Naive thymus-derived CD4-positive, alpha-beta T cell (primary cell): ENCODE measurements at regions of chr14 and their contacts with region 1.

Region 1: GRCh38 chr14:23095196-23096108 is at the start of gene C14orf119:
- DNase-seq: peak in 8 of 9 donors; percentile 88 to 100 (median 100)
- ATAC-seq: peak; percentile 93
- H3K4me3 ChIP-seq: peak within 1 kb of the TSS; percentile 88
- H3K4me3 Mint-ChIP-seq: no peak within 1 kb of the TSS
- H3K27ac ChIP-seq: peak within 1 kb of the TSS; percentile 97
- H3K27ac Mint-ChIP-seq: no peak within 1 kb of the TSS
- H3K4me1 ChIP-seq: peaks cover 26 to 32% of the 10 kb centered on the region in 2 donors
- H3K4me1 Mint-ChIP-seq: peaks cover 3 to 63% (median 33%) of the 10 kb centered on the region in 7 donors
- H3K27me3 ChIP-seq: no peaks in the 10 kb centered on the region
- H3K27me3 Mint-ChIP-seq: no peaks in the 10 kb centered on the region
- total RNA-seq, gene C14orf119: 6.0 to 49.9 (median 43.4) TPM

Region 2: GRCh38 chr14:22766456-22767322 is 328.8 kb before region 1 on chr14 and contains the start of gene OXA1L:
- CTCF ChIA-PET with region 1: no interaction called
- POLR2A ChIA-PET with region 1: interaction called, 8 read pairs
- intact Hi-C with region 1: loop called in 1 of 2 experiments (anchors 2 kb)
- DNase-seq: peak; percentile 86 to 99 (median 96)
- ATAC-seq: peak; percentile 96
- H3K4me3 ChIP-seq: peak within 1 kb of the TSS; percentile 93
- H3K4me3 Mint-ChIP-seq: peak within 1 kb of the TSS; percentile 86 to 97 (median 90)
- H3K27ac ChIP-seq: peak within 1 kb of the TSS; percentile 86
- H3K27ac Mint-ChIP-seq: peak within 1 kb of the TSS; percentile 88 to 99 (median 97)
- H3K4me1 ChIP-seq: peaks cover 18 to 24% of the 10 kb centered on the region in 2 donors
- H3K4me1 Mint-ChIP-seq: peaks cover 21 to 43% (median 39%) of the 10 kb centered on the region in 7 donors
- H3K27me3 ChIP-seq: no peaks in the 10 kb centered on the region
- H3K27me3 Mint-ChIP-seq: no peaks in the 10 kb centered on the region
- total RNA-seq, gene OXA1L: 112 to 177 (median 144) TPM

Region 3: GRCh38 chr14:22929104-22929847 is 166.2 kb before region 1 on chr14 and contains the start of gene PRMT5:
- CTCF ChIA-PET with region 1: no interaction called
- POLR2A ChIA-PET with region 1: interaction called, 11 read pairs
- intact Hi-C with region 1: loop called (anchors 1 kb)
- DNase-seq: peak; percentile 81 to 100 (median 99)
- ATAC-seq: peak; percentile 97
- H3K4me3 ChIP-seq: peak within 1 kb of the TSS; percentile 91
- H3K4me3 Mint-ChIP-seq: no peak within 1 kb of the TSS
- H3K27ac ChIP-seq: peak within 1 kb of the TSS; percentile 91
- H3K27ac Mint-ChIP-seq: no peak within 1 kb of the TSS
- H3K4me1 ChIP-seq: peaks cover 9 to 17% of the 10 kb centered on the region in 2 donors
- H3K4me1 Mint-ChIP-seq: peaks cover 5 to 36% (median 20%) of the 10 kb centered on the region in 7 donors
- H3K27me3 ChIP-seq: no peaks in the 10 kb centered on the region
- H3K27me3 Mint-ChIP-seq: no peaks in the 10 kb centered on the region
- total RNA-seq, gene PRMT5: 24.9 to 82.8 (median 34.2) TPM

Region 4: GRCh38 chr14:23034483-23035302 is 60.8 kb before region 1 on chr14 and contains the start of gene PSMB5:
- CTCF ChIA-PET with region 1: no interaction called
- POLR2A ChIA-PET with region 1: no interaction called
- intact Hi-C with region 1: loop called (anchors 1 kb)
- DNase-seq: peak; percentile 63 to 94 (median 91)
- ATAC-seq: peak; percentile 95
- H3K4me3 ChIP-seq: peak within 1 kb of the TSS; percentile 79
- H3K4me3 Mint-ChIP-seq: peak within 1 kb of the TSS; percentile 87 to 96 (median 92)
- H3K27ac ChIP-seq: peak within 1 kb of the TSS; percentile 83
- H3K27ac Mint-ChIP-seq: peak within 1 kb of the TSS; percentile 93 to 99 (median 96)
- H3K4me1 ChIP-seq: peaks cover 9 to 17% of the 10 kb centered on the region in 2 donors
- H3K4me1 Mint-ChIP-seq: peaks cover 22 to 43% (median 29%) of the 10 kb centered on the region in 7 donors
- H3K27me3 ChIP-seq: no peaks in the 10 kb centered on the region
- H3K27me3 Mint-ChIP-seq: no peaks in the 10 kb centered on the region
- total RNA-seq, gene PSMB5: 19.2 to 69.1 (median 32.8) TPM

Region 5: GRCh38 chr14:23120541-23121251 is 25.2 kb after region 1 on chr14:
- CTCF ChIA-PET with region 1: interaction called, 20 read pairs
- POLR2A ChIA-PET with region 1: interaction called, 75 read pairs
- intact Hi-C with region 1: loop called (anchors 1 to 2 kb)
- DNase-seq: peak; percentile 58 to 77 (median 74)
- ATAC-seq: peak; percentile 92
- H3K4me3 ChIP-seq: peak overlapping the region; percentile 53
- H3K4me3 Mint-ChIP-seq: peak overlapping the region; percentile 63 to 87 (median 72)
- H3K27ac ChIP-seq: peak overlapping the region; percentile 71
- H3K27ac Mint-ChIP-seq: peak overlapping the region; percentile 90 to 99 (median 96)
- H3K4me1 ChIP-seq: peaks cover 21 to 41% of the 10 kb centered on the region in 2 donors
- H3K4me1 Mint-ChIP-seq: peaks cover 26 to 65% (median 48%) of the 10 kb centered on the region in 7 donors
- H3K27me3 ChIP-seq: no peaks in the 10 kb centered on the region
- H3K27me3 Mint-ChIP-seq: peaks cover 0 to 5% (median 0%) of the 10 kb centered on the region in 5 donors

Region 6: DNA sequence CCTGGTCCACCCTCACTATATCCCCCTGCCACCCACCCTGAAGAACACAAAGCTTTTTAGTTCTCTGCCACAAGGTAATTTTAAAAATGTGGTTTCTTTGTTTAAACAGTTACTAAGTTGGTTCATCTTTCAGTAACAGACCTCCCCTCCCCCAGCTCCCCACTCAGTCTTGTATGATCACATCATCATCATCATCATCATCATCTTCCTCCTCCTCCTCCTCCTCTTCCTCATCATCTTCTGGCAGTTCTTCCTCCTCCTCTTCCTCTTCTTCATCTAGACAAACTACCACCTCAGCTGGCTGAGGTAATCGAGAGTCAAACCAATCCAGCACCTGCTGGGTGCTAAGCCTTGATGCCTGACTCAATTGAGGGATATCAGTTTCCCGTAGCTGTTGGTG is 180.0 kb after region 1 on chr14:
- CTCF ChIA-PET with region 1: no interaction called
- POLR2A ChIA-PET with region 1: no interaction called
- intact Hi-C with region 1: no loop called
- DNase-seq: no peak
- ATAC-seq: no peak
- H3K4me3 ChIP-seq: no peak overlapping the region
- H3K4me3 Mint-ChIP-seq: no peak overlapping the region
- H3K27ac ChIP-seq: no peak overlapping the region
- H3K27ac Mint-ChIP-seq: peak overlapping the region in 3 of 9 donors; percentile 21 to 49 (median 40)
- H3K4me1 ChIP-seq: no peaks in the 10 kb centered on the region
- H3K4me1 Mint-ChIP-seq: peaks cover 2 to 8% (median 4%) of the 10 kb centered on the region in 7 donors
- H3K27me3 ChIP-seq: no peaks in the 10 kb centered on the region
- H3K27me3 Mint-ChIP-seq: no peaks in the 10 kb centered on the region

Region 7: GRCh38 chr14:23555882-23556699 is 460.6 kb after region 1 on chr14 and contains the start of gene THTPA:
- CTCF ChIA-PET with region 1: no interaction called
- POLR2A ChIA-PET with region 1: interaction called, 3 read pairs
- intact Hi-C with region 1: loop called (anchors 1 to 10 kb)
- DNase-seq: peak; percentile 84 to 96 (median 89)
- ATAC-seq: peak; percentile 94
- H3K4me3 ChIP-seq: peak within 1 kb of the TSS; percentile 84
- H3K4me3 Mint-ChIP-seq: peak within 1 kb of the TSS; percentile 80 to 99 (median 96)
- H3K27ac ChIP-seq: peak within 1 kb of the TSS; percentile 83
- H3K27ac Mint-ChIP-seq: peak within 1 kb of the TSS; percentile 78 to 97 (median 94)
- H3K4me1 ChIP-seq: peaks cover 10 to 16% of the 10 kb centered on the region in 2 donors
- H3K4me1 Mint-ChIP-seq: peaks cover 18 to 45% (median 38%) of the 10 kb centered on the region in 7 donors
- H3K27me3 ChIP-seq: no peaks in the 10 kb centered on the region
- H3K27me3 Mint-ChIP-seq: peaks cover 0 to under 1% (median 0%) of the 10 kb centered on the region in 5 donors
- total RNA-seq, gene THTPA: 16.4 to 26.7 (median 19.2) TPM